IMR-90 (cell line): ENCODE measurements at regions of chr4 and their contacts with region 1.

Region 1: DNA sequence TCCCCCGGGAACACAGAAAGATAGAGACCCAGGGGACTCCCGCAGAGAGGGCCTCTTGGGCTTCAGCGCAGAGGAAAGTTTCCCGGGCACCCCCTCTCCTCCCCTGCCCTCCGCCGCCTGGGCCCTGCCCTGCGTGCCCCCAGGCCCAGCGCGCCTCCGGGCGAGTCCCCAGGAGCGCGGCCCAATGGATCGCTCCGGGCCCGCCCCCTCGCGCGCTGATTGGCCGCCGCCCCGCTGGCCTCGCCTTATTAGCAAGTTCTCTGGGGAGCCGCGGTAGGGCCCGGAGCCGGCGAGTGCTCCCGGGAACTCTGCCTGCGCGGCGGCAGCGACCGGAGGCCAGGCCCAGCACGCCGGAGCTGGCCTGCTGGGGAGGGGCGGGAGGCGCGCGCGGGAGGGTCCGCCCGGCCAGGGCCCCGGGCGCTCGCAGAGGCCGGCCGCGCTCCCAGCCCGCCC is at the start of gene MSX1:
- DNase-seq: peak; percentile 75
- ATAC-seq: peak; percentile 95
- H3K4me3 ChIP-seq: peak within 1 kb of the TSS; percentile 66
- H3K27ac ChIP-seq: no peak within 1 kb of the TSS; the same call in 1 of the 2 replicates
- H3K4me1 ChIP-seq: no peaks in the 10 kb centered on the region; the same call in 1 of the 2 replicates
- H3K27me3 ChIP-seq: peaks cover 37% of the 10 kb centered on the region
- CTCF ChIP-seq: no peak
- POLR2A ChIP-seq: peak; percentile 94
- RAD21 ChIP-seq: no peak
- total RNA-seq, gene MSX1: 1.1 TPM in 2 replicates

Region 2: GRCh38 chr4:4541661-4542570 is 317.5 kb before region 1 on chr4 and contains the start of gene STX18:
- CTCF ChIA-PET with region 1: no interaction called
- POLR2A ChIA-PET with region 1: no interaction called
- dilution Hi-C with region 1: no loop called
- in situ Hi-C with region 1: no loop called
- intact Hi-C with region 1: loop called (anchors 2 kb)
- DNase-seq: peak; percentile 83
- ATAC-seq: peak; percentile 99
- H3K4me3 ChIP-seq: peak within 1 kb of the TSS; percentile 66
- H3K27ac ChIP-seq: peak within 1 kb of the TSS; percentile 74
- H3K4me1 ChIP-seq: no peaks in the 10 kb centered on the region
- H3K27me3 ChIP-seq: no peaks in the 10 kb centered on the region
- CTCF ChIP-seq: no peak
- POLR2A ChIP-seq: peak; percentile 84
- RAD21 ChIP-seq: peak; percentile 38
- total RNA-seq, gene STX18: 20.1 and 26.9 TPM in 2 replicates